PC-9 (cell line): ENCODE measurements at regions of chr7 and their contacts with region 1.

Region 1: GRCh38 chr7:18583305-18583704 is 87.8 kb downstream of the HDAC9 start:
- DNase-seq: no peak
- H3K4me3 ChIP-seq: no peak overlapping the region
- H3K27ac ChIP-seq: no peak overlapping the region
- H3K4me1 ChIP-seq: no peaks in the 10 kb centered on the region
- H3K27me3 ChIP-seq: no peaks in the 10 kb centered on the region
- CTCF ChIP-seq: no peak

Region 2: GRCh38 chr7:18330548-18330947 is 252.8 kb before region 1 on chr7:
- CTCF ChIA-PET with region 1: no interaction called
- POLR2A ChIA-PET with region 1: no interaction called
- intact Hi-C with region 1: no loop called
- DNase-seq: no peak
- H3K4me3 ChIP-seq: no peak overlapping the region
- H3K27ac ChIP-seq: no peak overlapping the region
- H3K4me1 ChIP-seq: no peaks in the 10 kb centered on the region
- H3K27me3 ChIP-seq: no peaks in the 10 kb centered on the region
- CTCF ChIP-seq: no peak

Region 3: DNA sequence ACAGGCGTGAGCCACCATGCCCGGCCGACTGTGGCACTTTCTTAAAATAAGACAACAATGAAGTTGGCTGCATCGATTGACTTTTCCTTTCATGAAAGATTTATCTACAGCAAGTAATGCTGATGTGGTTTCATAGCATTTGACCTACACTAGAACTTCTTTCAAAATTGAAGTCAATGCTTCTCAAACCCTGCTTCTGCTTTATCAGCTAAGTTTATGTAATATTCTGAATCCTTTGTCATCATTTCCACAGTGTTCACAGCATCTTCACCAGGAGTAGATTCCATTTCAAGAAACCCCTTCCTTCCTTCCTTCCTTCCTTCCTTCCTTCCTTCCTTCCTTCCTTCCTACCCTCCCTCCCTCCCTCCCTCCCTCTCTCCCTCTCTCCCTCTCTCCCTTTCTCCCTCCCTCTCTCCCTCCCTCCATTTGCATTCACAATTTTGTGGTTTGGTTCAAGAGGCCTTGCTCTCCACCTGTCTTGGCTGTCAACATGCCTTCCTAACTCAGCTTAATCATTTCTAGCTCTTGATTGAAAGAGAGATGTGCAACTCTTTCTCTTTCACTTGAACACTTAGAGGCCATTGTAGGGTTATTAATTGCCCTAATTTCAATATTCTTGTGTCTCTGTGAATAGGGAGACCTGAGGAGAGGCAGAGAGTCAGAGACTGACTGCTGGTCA is 35.7 kb before region 1 on chr7:
- CTCF ChIA-PET with region 1: interaction called, 15 read pairs
- POLR2A ChIA-PET with region 1: no interaction called
- intact Hi-C with region 1: no loop called
- DNase-seq: no peak
- H3K4me3 ChIP-seq: no peak overlapping the region
- H3K27ac ChIP-seq: no peak overlapping the region
- H3K4me1 ChIP-seq: no peaks in the 10 kb centered on the region
- H3K27me3 ChIP-seq: no peaks in the 10 kb centered on the region
- CTCF ChIP-seq: no peak